Mammary epithelial cell (primary cell): ENCODE measurements at regions of chr21 and their contacts with region 1.

Region 1: GRCh38 chr21:17295997-17296396 is 216.8 kb upstream of the CXADR start:
- DNase-seq: no peak
- H3K4me3 ChIP-seq: no peak overlapping the region
- H3K27ac ChIP-seq: no peak overlapping the region
- H3K4me1 ChIP-seq: no peaks in the 10 kb centered on the region
- H3K27me3 ChIP-seq: no peaks in the 10 kb centered on the region
- CTCF ChIP-seq: no peak

Region 2: GRCh38 chr21:15436031-15436430 is 1860.0 kb before region 1 on chr21:
- CTCF ChIA-PET with region 1: interaction called, 22 read pairs
- dilution Hi-C with region 1: no loop called
- in situ Hi-C with region 1: no loop called
- intact Hi-C with region 1: no loop called
- DNase-seq: no peak
- H3K4me3 ChIP-seq: no peak overlapping the region
- H3K27ac ChIP-seq: no peak overlapping the region
- H3K4me1 ChIP-seq: no peaks in the 10 kb centered on the region
- H3K27me3 ChIP-seq: no peaks in the 10 kb centered on the region
- CTCF ChIP-seq: no peak

Region 3: GRCh38 chr21:17250778-17251241 is 45.2 kb before region 1 on chr21:
- CTCF ChIA-PET with region 1: no interaction called
- dilution Hi-C with region 1: no loop called
- in situ Hi-C with region 1: no loop called
- intact Hi-C with region 1: no loop called
- DNase-seq: no peak
- H3K4me3 ChIP-seq: no peak overlapping the region
- H3K27ac ChIP-seq: no peak overlapping the region
- H3K4me1 ChIP-seq: no peaks in the 10 kb centered on the region
- H3K27me3 ChIP-seq: no peaks in the 10 kb centered on the region
- CTCF ChIP-seq: no peak

Region 4: DNA sequence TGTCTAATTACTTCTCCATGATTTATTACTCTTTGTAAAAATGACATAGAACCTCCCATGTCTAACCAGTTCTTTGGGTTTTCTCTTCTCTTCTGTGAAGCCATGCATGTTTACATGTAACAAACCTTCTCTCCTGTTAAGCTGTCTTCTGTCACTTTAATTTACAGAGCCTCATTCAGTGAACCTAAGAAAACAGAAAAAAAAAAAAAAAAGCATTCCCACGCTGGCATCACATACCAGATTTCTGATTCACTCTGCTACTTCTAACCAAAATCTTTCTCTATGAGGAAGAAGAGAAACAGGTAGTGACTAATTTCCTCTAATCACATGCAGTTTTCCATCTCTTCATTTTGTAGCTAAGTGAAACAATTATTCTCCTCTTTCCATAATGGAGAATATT is 75.5 kb after region 1 on chr21:
- CTCF ChIA-PET with region 1: no interaction called
- dilution Hi-C with region 1: no loop called
- in situ Hi-C with region 1: no loop called
- intact Hi-C with region 1: no loop called
- DNase-seq: peak; percentile 80
- H3K4me3 ChIP-seq: no peak overlapping the region
- H3K27ac ChIP-seq: no peak overlapping the region
- H3K4me1 ChIP-seq: no peaks in the 10 kb centered on the region
- H3K27me3 ChIP-seq: no peaks in the 10 kb centered on the region
- CTCF ChIP-seq: no peak